A549 (cell line): ENCODE measurements at regions of chr20 and their contacts with region 1.

Region 1: DNA sequence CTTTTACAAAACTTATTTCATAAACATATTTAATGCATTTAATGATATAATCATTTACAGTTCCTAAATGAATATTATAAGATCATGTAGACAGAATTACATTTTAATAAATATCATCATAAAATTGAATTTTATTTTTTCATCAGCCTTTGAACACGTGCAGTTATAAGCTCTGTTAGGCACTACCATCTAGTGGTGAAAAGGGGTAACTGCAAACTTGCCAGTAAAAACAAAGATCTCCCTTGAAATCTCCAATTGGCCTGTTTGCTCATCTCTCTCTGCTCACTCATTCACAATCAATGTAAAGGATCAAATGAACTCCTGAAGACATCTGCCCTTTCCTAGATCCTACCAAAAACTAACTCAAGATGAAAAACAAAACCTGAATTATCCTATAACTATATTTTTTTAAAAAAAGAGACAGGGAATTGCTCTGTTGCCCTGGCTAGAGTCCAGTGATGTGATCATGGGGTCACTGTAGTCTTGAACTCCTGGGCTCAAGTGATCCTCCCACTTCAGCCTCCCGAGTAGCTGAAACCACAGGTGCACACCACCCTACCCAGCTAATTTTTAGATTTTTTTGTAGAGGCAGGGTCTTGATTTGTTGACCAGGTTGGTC is 31.7 kb downstream of the SAMHD1 start:
- DNase-seq: peak; percentile 50 to 63
- ATAC-seq: peak in 1 of 2 experiments; percentile 65; a peak in 3 of 6 replicates
- H3K4me3 ChIP-seq: no peak overlapping the region
- H3K27ac ChIP-seq: no peak overlapping the region
- H3K4me1 ChIP-seq: peaks cover 11% of the 10 kb centered on the region
- CTCF ChIP-seq: peak; percentile 86
- EP300 ChIP-seq: no peak
- POLR2A ChIP-seq: no peak
- RAD21 ChIP-seq: peak; percentile 71 to 81

Region 2: GRCh38 chr20:36886859-36887751 is 32.7 kb before region 1 on chr20:
- CTCF ChIA-PET with region 1: interaction called, 13 read pairs
- POLR2A ChIA-PET with region 1: no interaction called
- DNase-seq: peak; percentile 80 to 90
- ATAC-seq: peak; percentile 93 to 97
- H3K4me3 ChIP-seq: no peak overlapping the region
- H3K27ac ChIP-seq: peak overlapping the region; percentile 24 to 64; a peak in 4 of 6 replicates
- H3K4me1 ChIP-seq: no peaks in the 10 kb centered on the region
- CTCF ChIP-seq: peak; percentile 92
- EP300 ChIP-seq: no peak
- POLR2A ChIP-seq: no peak
- RAD21 ChIP-seq: peak; percentile 93 to 96

Region 3: DNA sequence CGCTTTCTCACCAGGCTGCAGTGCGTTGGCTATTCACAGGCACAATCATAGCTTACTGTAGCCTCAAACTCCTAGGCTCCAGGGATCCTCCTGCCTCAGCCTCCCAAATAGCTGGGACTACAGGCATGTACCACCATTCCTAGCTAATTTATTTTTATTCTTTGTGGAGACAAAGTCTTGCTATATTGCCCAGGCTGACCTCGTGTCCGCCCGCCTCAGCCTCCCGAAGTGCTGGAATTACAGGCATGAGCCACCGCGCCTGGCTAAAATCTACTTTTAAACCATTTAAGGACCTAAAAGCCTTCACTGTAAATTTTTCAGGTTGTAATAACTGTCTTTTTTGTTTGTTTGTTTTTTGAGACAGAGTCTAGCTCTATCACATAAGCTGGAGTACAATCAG is 16.5 kb after region 1 on chr20:
- CTCF ChIA-PET with region 1: interaction called, 11 read pairs
- POLR2A ChIA-PET with region 1: no interaction called
- DNase-seq: no peak
- ATAC-seq: no peak
- H3K4me3 ChIP-seq: no peak overlapping the region
- H3K27ac ChIP-seq: no peak overlapping the region
- H3K4me1 ChIP-seq: no peaks in the 10 kb centered on the region
- CTCF ChIP-seq: no peak
- EP300 ChIP-seq: no peak
- POLR2A ChIP-seq: no peak
- RAD21 ChIP-seq: no peak